ENCODE measurements at regions of chr16 and their contacts with region 1.

Region 1: GRCh38 chr16:66357153-66357928 is 9.2 kb upstream of the CDH5 start:
- DNase-seq: peak in 6 of 14 experiments; percentile 8 to 57 (median 36)
- ATAC-seq: no peak
- H3K4me3 ChIP-seq: no peak overlapping the region
- H3K4me3 Mint-ChIP-seq: no peak overlapping the region
- H3K27ac ChIP-seq: no peak overlapping the region
- H3K27ac Mint-ChIP-seq: no peak overlapping the region
- H3K4me1 ChIP-seq: peaks cover 6% of the 10 kb centered on the region
- H3K4me1 Mint-ChIP-seq: no peaks in the 10 kb centered on the region
- H3K27me3 ChIP-seq: peaks cover 7 to 24% of the 10 kb centered on the region in 2 experiments
- H3K27me3 Mint-ChIP-seq: peaks cover 61% of the 10 kb centered on the region
- CTCF ChIP-seq: peak; percentile 72

Region 2: DNA sequence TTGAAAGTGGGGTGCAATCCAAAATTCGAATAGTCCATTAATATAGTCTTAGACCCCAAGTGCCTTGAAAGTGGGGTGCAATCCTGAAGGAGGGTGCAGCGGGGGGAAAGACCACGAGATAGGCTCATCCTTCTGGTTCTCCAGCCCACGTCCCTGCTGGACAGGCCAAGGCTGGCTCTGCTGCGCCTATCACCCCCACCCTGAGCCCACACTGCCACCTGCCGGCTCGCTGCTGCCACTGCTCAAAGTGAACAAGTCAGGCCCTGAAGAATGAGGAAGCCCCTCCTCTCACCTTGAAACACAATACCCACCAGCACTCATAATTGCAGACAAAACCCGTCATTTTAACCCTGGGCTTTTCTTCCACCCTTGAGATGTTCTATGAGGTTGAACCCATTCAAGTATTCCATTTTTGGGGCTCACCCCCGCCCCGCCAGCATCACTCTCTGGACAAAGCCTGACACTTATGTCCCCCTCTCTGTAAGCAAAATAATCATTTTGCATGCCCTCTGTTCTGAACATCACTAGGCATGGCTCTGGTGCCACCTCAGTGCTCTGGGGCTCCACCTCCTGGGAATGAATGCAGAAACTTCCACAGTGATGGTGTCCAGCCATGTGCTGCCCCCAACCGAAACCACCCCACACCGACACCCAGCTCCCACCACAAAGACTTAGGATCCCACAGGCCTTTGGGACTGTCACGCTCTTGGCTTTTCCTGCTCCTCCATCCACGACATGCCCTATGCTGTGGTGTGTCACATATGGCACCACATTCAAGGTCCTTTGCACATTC is 126.5 kb after region 1 on chr16:
- CTCF ChIA-PET with region 1: no interaction called
- POLR2A ChIA-PET with region 1: no interaction called
- intact Hi-C with region 1: loop called in 1 of 2 experiments (anchors 2 kb)
- DNase-seq: peak; percentile 57 to 83 (median 68)
- ATAC-seq: peak; percentile 85
- H3K4me3 ChIP-seq: no peak overlapping the region
- H3K4me3 Mint-ChIP-seq: no peak overlapping the region
- H3K27ac ChIP-seq: no peak overlapping the region
- H3K27ac Mint-ChIP-seq: peak overlapping the region; percentile 28
- H3K4me1 ChIP-seq: peaks cover 23% of the 10 kb centered on the region
- H3K4me1 Mint-ChIP-seq: peaks cover 15% of the 10 kb centered on the region
- H3K27me3 ChIP-seq: no peaks in the 10 kb centered on the region
- H3K27me3 Mint-ChIP-seq: no peaks in the 10 kb centered on the region
- CTCF ChIP-seq: peak; percentile 95

Region 3: DNA sequence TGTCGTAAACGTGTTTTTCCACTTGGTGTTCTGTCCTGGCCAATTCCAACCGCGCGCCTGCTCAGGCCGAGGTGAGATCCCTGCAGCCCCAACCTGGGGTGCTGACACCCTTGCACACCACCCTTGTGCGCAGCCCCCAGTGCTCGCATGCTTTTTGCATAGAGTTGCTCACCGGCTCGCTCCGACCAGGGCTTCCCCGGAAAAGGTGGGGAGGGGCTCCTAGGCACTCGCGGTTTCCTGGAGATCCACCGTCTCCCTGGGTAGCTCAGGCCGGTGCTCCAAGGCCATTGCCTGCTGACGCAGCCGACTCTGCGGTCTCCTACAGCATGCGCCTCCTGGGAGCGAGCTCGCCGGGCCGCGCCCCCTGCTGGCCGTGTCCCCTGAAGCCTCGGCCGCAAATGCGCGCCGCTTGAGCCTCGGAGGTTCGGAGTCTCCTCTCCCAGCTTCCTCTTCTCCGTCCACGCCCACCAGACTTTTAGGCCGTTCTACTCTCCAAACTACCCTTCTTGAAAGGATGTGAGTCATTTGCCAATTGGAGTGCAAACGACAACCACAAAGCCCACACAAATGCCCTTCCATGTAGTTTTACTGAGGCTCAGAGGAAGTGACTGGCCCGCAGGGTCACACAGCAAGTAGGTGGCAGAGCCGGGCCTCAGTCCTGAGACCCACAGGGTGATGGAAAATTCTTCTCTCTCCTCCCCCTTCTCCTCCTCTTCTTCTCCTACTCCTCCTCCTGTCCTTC is 515.8 kb after region 1 on chr16:
- CTCF ChIA-PET with region 1: no interaction called
- POLR2A ChIA-PET with region 1: no interaction called
- intact Hi-C with region 1: loop called in 1 of 2 experiments (anchors 5 kb)
- DNase-seq: peak; percentile 75 to 94 (median 82)
- ATAC-seq: peak; percentile 90
- H3K4me3 ChIP-seq: peak overlapping the region; percentile 57
- H3K4me3 Mint-ChIP-seq: peak overlapping the region; percentile 75
- H3K27ac ChIP-seq: peak overlapping the region in 1 of 2 donors; percentile 24
- H3K27ac Mint-ChIP-seq: peak overlapping the region; percentile 32
- H3K4me1 ChIP-seq: peaks cover 26% of the 10 kb centered on the region
- H3K4me1 Mint-ChIP-seq: peaks cover 21% of the 10 kb centered on the region
- H3K27me3 ChIP-seq: no peaks in the 10 kb centered on the region
- H3K27me3 Mint-ChIP-seq: no peaks in the 10 kb centered on the region
- CTCF ChIP-seq: peak; percentile 92